Head of caudate nucleus (tissue), 42 donors: ENCODE measurements at regions of chr11 and their contacts with region 1.

Region 1: DNA sequence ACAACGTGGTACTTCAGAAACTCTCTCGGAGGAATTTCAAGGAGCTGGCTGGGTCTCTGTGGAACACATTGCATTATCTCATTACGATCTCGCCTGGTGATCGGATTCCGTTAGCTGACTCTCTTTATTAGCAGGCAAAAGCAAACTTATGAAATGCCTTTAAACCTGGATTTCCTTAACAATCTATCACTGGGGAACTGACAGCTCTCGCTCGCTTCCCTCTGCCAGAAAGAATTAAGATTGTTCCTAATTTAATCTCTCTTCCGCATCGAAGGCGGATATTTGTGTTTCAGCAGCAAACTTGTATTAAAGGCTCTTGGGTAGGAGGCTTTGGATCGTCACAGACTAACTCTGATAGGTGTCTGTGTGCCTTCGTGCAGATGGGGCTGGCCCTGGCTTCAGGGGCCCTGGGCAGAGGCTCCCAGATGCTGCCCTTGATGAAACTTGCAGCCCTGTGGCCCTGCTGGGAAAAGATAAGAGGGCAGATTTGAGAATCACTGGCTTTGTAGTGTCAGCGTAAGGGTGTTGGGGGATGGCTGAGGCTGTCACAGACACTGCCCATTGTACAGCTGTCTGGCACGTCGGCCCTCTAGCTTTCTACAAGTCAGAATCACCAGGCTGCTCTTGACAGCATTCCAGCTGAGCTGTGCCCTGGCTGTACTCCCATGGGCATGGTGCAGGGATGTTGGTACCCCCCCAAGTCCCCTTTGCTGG is 162.2 kb upstream of the NECTIN1 start:
- DNase-seq: peak; percentile 40 to 95 (median 88)

Region 2: DNA sequence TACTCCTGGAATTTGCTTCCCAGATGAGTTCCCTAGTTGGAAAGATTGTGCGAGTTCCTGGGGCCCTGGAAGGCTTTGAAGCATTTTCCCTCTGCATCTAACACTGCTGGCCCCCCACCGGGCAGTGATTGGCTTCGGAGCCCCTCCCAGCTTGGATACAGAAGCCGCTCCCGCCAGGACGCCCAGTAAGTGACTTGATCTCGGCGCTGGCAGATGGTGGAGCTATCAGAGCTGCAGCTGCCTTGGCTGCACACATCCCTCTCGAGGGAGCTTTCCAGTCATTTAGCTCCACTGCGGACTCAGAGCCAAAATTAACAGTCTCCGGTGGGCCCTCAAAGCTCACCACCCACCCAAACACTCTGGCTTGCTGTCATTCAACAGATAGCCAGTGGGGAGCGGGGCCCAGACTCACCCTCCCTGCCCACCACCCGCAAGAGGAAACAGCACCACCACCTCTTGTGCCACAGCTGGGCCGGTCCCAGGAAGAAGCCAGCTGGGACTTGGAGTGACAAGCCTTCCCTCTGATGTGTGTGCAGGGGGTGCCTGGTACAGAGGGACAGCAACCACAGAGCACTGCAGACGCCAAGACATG is 84.4 kb after region 1 on chr11:
- intact Hi-C with region 1: loop called (anchors 5 kb)
- DNase-seq: peak; percentile 68 to 94 (median 88)

Region 3: GRCh38 chr11:119999220-119999619 is 108.0 kb after region 1 on chr11:
- intact Hi-C with region 1: no loop called
- DNase-seq: no peak